A673 (cell line): ENCODE measurements at regions of chr1 and their contacts with region 1.

Region 1: GRCh38 chr1:84772428-84772943 is 82.2 kb upstream of the SSX2IP start:
- DNase-seq: peak; percentile 85
- H3K4me3 ChIP-seq: no peak overlapping the region
- H3K27ac ChIP-seq: no peak overlapping the region
- H3K4me1 ChIP-seq: no peaks in the 10 kb centered on the region
- H3K27me3 ChIP-seq: peaks cover 3% of the 10 kb centered on the region
- CTCF ChIP-seq: peak; percentile 92

Region 2: GRCh38 chr1:83807821-83808220 is 964.7 kb before region 1 on chr1:
- CTCF ChIA-PET with region 1: interaction called, 3 read pairs
- POLR2A ChIA-PET with region 1: no interaction called
- intact Hi-C with region 1: loop called (anchors 5 kb)
- DNase-seq: no peak
- H3K4me3 ChIP-seq: no peak overlapping the region
- H3K27ac ChIP-seq: no peak overlapping the region
- H3K4me1 ChIP-seq: no peaks in the 10 kb centered on the region
- H3K27me3 ChIP-seq: peaks cover 5% of the 10 kb centered on the region
- CTCF ChIP-seq: no peak

Region 3: DNA sequence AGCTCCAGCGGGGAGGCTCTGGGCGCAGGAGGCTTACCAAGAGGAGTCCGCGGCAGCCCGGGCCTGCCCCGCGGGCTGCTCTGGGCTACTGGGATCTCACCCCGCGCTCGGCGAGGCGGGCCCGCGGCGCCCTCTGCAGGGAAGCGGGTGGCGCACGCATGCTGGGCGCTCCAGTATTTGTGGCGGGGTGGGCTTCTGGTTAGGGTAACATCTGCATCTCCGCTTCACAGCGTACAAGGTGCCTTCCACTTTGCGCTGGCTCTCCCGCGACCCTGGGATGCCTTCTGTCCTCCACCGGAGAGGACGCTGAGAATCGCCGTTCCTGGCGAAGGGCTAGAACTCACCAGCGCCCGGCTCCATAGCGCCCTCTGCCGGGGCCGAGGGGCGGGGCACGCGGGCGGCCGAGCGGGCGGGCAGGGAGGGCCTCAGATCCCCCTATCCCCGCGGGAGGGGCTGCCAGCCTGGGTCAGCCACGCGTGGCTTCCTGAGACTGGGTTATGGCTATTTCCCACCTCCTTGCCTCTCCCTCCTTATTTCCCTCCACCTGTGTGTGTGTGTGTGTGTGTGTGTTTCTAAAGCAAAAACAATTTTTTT is 151.7 kb before region 1 on chr1:
- CTCF ChIA-PET with region 1: no interaction called
- POLR2A ChIA-PET with region 1: no interaction called
- intact Hi-C with region 1: no loop called
- DNase-seq: peak; percentile 89
- H3K4me3 ChIP-seq: peak overlapping the region; percentile 64
- H3K27ac ChIP-seq: peak overlapping the region; percentile 65
- H3K4me1 ChIP-seq: peaks cover 15% of the 10 kb centered on the region
- H3K27me3 ChIP-seq: no peaks in the 10 kb centered on the region
- CTCF ChIP-seq: peak; percentile 97